Sigmoid colon (tissue), 7 donors: ENCODE measurements at regions of chr7 and their contacts with region 1.

Region 1: DNA sequence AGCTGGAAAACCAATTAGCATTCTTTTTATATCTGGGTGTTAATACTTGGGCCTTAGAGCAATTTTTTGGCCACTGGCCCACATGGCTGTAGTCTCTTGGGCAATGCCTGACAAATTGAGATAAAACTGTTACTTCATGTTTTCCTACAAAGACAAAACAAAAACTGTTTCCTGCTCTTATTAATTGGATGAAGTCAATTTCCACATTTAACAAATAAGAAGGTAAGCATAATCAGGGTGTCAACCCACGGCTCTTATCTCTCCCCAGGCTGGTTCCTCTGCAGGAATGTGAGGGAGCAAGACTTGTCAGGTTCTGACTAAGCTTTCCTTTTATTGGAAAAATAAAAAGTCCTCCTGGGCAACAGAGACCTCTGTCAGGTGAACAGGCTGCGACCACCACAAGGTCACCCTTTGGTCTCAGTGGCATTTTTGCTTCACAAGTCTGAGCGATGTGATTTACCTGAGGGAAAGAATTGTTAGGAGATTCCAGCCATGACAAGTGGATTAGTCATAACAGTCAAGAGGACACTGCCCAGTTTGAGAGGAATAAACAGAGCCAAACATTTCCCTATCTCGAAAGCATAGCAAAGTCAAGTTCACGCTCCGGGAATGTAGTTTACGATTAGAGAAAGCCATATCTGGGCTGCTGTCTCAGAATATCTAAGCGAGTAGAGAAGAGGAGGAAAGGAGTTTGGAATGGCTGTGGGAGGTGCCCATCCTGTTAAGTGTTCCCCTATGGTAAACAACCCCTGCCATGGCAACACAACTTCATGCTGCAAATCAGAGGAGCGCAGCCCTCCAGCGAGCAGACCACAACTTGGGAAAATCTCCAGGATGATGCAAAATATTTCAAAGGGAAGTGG is 144.4 kb downstream of the TES start:
- DNase-seq: peak; percentile 88
- H3K4me3 ChIP-seq: peak overlapping the region in 3 of 4 donors; percentile 4 to 13 (median 12)
- H3K27ac ChIP-seq: peak overlapping the region; percentile 82 to 87 (median 84)
- H3K4me1 ChIP-seq: peaks cover 0 to 59% (median 47%) of the 10 kb centered on the region in 4 donors
- H3K27me3 ChIP-seq: no peaks in the 10 kb centered on the region
- CTCF ChIP-seq: no peak
- EP300 ChIP-seq: peak in 1 of 4 donors; percentile 25
- POLR2A ChIP-seq: no peak

Region 2: DNA sequence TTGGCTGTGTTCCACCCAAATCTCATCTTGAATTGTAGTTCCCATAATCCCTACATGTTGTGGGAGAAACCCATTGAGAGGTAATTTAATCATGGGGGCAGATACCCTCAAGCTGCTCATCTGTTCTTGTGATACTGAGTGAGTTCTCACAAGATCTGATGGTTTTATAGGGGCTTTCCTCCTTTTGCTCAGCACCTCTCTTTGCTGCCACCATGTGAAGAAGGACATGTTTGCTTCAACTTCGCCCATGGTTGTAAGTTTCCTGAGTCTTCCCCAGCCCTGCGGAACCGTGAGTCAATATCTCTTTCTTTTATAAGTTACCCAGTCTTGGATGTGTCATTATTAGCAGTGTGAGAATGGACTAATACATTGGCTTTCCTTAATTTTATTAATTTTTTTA is 905.1 kb before region 1 on chr7:
- intact Hi-C with region 1: no loop called
- DNase-seq: no peak
- H3K4me3 ChIP-seq: no peak overlapping the region
- H3K27ac ChIP-seq: no peak overlapping the region
- H3K4me1 ChIP-seq: no peaks in the 10 kb centered on the region
- H3K27me3 ChIP-seq: no peaks in the 10 kb centered on the region
- CTCF ChIP-seq: no peak
- EP300 ChIP-seq: no peak
- POLR2A ChIP-seq: no peak

Region 3: GRCh38 chr7:116271963-116272839 is 82.6 kb before region 1 on chr7:
- intact Hi-C with region 1: loop called (anchors 1 kb)
- DNase-seq: peak; percentile 90
- H3K4me3 ChIP-seq: peak overlapping the region in 2 of 4 donors; percentile 11 to 16
- H3K27ac ChIP-seq: peak overlapping the region; percentile 79 to 91 (median 85)
- H3K4me1 ChIP-seq: peaks cover 0 to 77% (median 48%) of the 10 kb centered on the region in 4 donors
- H3K27me3 ChIP-seq: no peaks in the 10 kb centered on the region
- CTCF ChIP-seq: no peak
- EP300 ChIP-seq: peak; percentile 84 to 96 (median 94)
- POLR2A ChIP-seq: no peak

Region 4: DNA sequence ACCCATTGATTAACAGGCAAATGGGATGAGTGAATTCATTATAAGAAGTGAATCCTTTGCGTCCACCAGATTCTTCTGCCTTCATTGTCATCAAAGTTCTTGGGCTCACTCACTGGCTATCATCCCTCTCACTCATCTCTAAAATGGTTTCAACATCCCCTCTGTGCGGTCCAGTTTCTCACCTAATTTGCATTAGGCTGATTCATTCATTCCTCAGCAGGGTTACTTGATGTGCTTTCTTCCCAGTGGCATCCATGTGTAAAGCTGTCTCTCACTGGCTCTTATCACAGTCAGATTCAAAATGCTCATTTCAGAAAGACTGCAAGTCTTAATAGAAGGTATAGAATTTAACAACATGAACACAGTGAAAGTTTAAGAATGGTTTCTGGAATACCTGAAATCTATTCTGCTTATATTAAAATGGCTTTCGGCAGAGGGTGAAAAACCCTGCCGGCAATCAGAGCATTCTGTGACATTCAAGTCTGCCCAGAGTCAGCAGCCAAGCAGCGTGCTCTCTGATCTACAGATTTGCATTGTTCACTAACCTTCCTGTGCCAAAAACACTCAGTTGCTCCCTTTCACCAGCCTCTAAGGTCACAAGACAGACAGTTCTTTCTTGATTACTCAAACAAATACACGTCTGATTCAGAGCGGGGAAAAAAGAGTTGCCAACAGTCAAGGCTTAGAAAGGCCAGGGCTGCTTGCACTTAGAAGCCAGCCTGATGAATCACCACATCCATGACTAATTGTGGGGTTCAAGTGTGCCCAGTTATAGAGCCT is 37.8 kb before region 1 on chr7:
- intact Hi-C with region 1: loop called (anchors 5 kb)
- DNase-seq: peak; percentile 84
- H3K4me3 ChIP-seq: peak overlapping the region in 1 of 4 donors; percentile 8
- H3K27ac ChIP-seq: peak overlapping the region; percentile 74 to 83 (median 81)
- H3K4me1 ChIP-seq: peaks cover 0 to 30% (median 22%) of the 10 kb centered on the region in 4 donors
- H3K27me3 ChIP-seq: no peaks in the 10 kb centered on the region
- CTCF ChIP-seq: no peak
- EP300 ChIP-seq: peak in 3 of 4 donors; percentile 32 to 51 (median 36)
- POLR2A ChIP-seq: no peak

Region 5: GRCh38 chr7:116468534-116468933 is 113.8 kb after region 1 on chr7:
- intact Hi-C with region 1: no loop called
- DNase-seq: no peak
- H3K4me3 ChIP-seq: no peak overlapping the region
- H3K27ac ChIP-seq: no peak overlapping the region
- H3K4me1 ChIP-seq: peaks cover 0 to 11% (median 0%) of the 10 kb centered on the region in 4 donors
- H3K27me3 ChIP-seq: no peaks in the 10 kb centered on the region
- CTCF ChIP-seq: no peak
- EP300 ChIP-seq: no peak
- POLR2A ChIP-seq: no peak

Region 6: GRCh38 chr7:116499168-116500077 is 144.6 kb after region 1 on chr7 and contains the start of gene CAV2:
- intact Hi-C with region 1: loop called (anchors 5 kb)
- DNase-seq: peak; percentile 81
- H3K4me3 ChIP-seq: peak within 1 kb of the TSS; percentile 61 to 82 (median 78)
- H3K27ac ChIP-seq: peak within 1 kb of the TSS; percentile 89 to 98 (median 95)
- H3K4me1 ChIP-seq: peaks cover 0 to 30% (median 14%) of the 10 kb centered on the region in 4 donors
- H3K27me3 ChIP-seq: no peaks in the 10 kb centered on the region
- CTCF ChIP-seq: no peak
- EP300 ChIP-seq: no peak
- POLR2A ChIP-seq: peak in 1 of 2 donors; percentile 39
- total RNA-seq, gene CAV2: 81.8 to 142 (median 88.6) TPM

Region 7: DNA sequence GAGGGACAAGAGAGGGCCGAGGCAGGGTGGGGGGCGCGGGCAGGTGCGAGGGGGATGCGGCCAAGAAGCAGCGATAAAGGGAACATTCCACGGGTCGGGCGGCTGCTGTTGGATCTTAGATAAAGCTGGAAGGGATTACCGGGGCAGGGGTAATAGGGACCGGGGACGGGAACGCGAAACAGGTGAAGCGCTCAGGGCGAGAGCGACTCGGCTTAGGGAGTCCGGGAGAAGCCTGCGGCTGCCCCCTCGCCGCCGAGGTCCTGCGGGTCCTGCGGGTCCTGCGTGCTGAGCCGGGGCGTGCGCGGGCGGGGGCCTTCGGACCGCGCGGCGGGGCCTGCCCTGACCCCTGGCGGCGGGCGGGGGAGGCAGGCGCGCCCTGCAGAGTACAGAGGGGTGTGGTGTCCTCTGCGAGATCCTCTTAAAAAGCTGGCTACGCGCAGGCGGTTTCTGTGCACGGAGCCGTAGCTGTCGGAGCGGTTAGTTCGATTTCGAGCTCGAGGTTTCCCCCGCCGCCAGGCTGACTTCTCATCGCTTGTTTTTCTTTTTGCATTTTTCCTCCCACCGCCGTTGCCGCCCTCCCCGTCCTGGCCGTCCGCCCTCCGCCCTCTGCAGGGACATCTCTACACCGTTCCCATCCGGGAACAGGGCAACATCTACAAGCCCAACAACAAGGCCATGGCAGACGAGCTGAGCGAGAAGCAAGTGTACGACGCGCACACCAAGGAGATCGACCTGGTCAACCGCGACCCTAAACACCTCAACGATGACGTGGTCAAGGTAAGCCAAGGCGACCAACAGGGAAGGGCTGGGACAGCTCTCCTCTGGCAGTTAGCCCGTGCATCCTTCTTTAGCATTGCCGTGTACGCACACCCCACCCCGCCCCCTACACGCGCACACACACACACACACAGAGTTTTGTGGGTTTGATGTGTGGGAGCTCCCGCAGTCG is 171.4 kb after region 1 on chr7:
- intact Hi-C with region 1: loop called (anchors 1 kb)
- DNase-seq: peak; percentile 93
- H3K4me3 ChIP-seq: peak overlapping the region; percentile 69 to 89 (median 80)
- H3K27ac ChIP-seq: peak overlapping the region; percentile 94 to 99 (median 98)
- H3K4me1 ChIP-seq: peaks cover 0 to 40% (median 24%) of the 10 kb centered on the region in 4 donors
- H3K27me3 ChIP-seq: no peaks in the 10 kb centered on the region
- CTCF ChIP-seq: peak in 3 of 4 experiments; percentile 14 to 88 (median 42)
- EP300 ChIP-seq: no peak
- POLR2A ChIP-seq: peak in 1 of 2 donors; percentile 63

Region 8: DNA sequence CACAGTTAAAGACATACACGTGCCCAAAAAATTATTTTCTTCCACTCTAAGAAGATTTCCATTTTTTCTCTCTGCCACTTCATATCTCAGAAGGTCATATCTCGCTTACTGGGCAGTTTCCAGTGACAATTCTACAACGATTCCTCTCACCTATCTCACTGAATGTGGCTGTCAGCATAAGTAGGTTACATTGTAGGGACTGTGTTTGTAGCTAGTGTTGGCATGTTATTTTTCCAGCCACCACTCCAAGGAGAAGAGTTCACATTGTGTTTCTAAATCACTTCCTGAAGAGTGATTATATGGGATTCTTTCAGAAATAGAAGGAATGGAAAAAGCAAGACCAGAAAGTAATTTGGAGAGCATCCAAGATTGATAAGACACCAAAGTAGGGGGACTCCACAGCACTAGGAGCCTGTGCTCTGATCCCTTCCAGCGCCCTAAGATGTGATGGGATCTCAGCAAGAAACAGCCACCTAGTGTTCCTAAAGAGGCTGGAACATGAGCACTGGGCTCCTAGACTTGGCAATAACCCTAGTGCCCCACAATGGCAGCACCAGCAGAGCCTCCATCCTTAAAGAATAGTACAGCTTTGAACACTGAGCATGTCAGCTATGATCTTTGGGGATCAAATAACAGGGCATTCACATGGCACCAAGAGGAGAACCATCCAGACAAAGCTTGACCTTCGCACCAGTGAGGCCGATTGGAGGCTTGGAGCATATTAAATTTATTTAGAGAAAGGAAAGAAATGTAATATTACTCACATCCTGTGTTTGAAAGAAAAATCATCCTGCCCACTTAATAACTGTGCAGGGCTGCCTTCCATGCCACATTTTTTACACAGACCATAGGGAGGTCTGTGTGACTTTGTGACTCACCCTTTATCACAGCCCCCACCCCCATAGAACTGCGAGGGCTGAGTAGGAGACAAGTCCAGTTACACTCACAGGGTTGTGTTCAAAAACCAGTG is 221.9 kb after region 1 on chr7:
- intact Hi-C with region 1: loop called (anchors 10 kb)
- DNase-seq: no peak
- H3K4me3 ChIP-seq: no peak overlapping the region
- H3K27ac ChIP-seq: peak overlapping the region; percentile 7 to 50 (median 30)
- H3K4me1 ChIP-seq: peaks cover 0 to 14% (median 10%) of the 10 kb centered on the region in 4 donors
- H3K27me3 ChIP-seq: no peaks in the 10 kb centered on the region
- CTCF ChIP-seq: no peak
- EP300 ChIP-seq: no peak
- POLR2A ChIP-seq: no peak